ENCODE measurements at regions of chr10 and their contacts with region 1.

Region 1: DNA sequence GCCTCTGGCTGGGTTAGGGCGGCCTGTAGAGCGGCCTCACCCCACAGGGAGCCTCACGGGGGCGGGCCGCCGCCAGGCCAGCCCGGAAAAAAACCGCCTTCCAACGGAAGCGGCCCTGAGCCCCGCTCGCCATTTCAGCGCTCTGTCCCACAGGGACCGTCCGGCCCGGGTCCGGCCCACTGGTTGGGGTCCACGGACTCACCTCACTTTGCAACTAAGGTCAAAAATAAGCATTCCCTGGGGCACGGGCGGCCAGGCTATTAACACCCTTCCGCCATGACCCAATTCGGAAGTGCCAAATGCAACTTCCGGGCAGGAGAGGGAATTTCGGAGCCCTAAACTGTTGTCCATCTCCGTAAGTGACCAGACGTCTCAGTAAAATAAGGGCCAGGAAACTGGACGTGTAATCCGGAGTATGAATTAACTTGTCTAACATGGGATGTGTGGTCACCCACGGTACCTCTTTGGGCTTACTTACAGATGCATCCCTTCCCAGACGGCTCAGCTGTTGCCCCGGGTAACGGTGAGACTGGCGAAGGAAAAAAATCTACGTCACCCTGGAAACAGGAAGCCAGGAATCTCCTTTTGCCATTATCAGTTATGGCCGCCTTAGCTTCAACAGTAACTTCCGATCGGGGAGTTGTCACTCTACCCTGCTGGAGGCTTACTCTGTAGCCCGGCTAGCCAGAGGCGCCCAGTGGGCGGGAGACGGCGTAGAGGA is at the start of gene BBIP1:
- DNase-seq: peak; percentile 100
- H3K4me3 ChIP-seq: peak within 1 kb of the TSS; percentile 97
- H3K27ac ChIP-seq: peak within 1 kb of the TSS; percentile 96
- H3K4me1 ChIP-seq: peaks cover 57% of the 10 kb centered on the region
- CTCF ChIP-seq: no peak
- total RNA-seq, gene BBIP1: 8.9 and 34.4 TPM in 2 replicates

Region 2: GRCh38 chr10:110629680-110630191 is 289.1 kb before region 1 on chr10:
- CTCF ChIA-PET with region 1: no interaction called
- POLR2A ChIA-PET with region 1: no interaction called
- intact Hi-C with region 1: no loop called
- DNase-seq: no peak
- H3K4me3 ChIP-seq: no peak overlapping the region
- H3K27ac ChIP-seq: no peak overlapping the region
- H3K4me1 ChIP-seq: no peaks in the 10 kb centered on the region
- CTCF ChIP-seq: no peak

Region 3: GRCh38 chr10:110746254-110746826 is 172.5 kb before region 1 on chr10:
- CTCF ChIA-PET with region 1: no interaction called
- POLR2A ChIA-PET with region 1: no interaction called
- intact Hi-C with region 1: loop called (anchors 1 kb)
- DNase-seq: peak; percentile 71
- H3K4me3 ChIP-seq: no peak overlapping the region
- H3K27ac ChIP-seq: no peak overlapping the region
- H3K4me1 ChIP-seq: peaks cover 58% of the 10 kb centered on the region
- CTCF ChIP-seq: peak; percentile 99

Region 4: DNA sequence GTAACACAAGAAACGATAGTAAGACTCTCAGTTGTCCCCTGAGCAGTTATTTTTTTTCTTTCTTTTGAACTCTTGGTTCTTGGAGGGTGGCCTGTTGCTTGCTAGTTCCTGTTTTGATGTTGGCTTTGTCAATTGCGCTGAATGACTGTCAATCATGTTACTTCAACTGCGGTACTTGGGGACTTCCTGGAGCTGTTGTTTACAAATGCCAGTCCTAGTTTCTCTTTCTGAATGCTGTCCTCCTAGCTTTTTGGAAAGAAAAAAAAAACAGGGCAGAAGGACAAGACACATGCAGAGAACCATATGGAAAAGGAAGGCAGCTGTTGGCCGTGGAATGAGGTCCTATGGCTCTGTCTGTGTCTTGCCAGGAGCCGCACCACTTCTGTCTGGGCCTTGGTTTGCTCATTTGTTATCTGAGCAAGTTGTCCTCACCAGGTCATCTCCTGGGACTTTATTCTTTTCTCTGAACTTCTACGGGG is 54.1 kb before region 1 on chr10:
- CTCF ChIA-PET with region 1: no interaction called
- POLR2A ChIA-PET with region 1: interaction called, 10 read pairs
- intact Hi-C with region 1: loop called (anchors 2 kb)
- DNase-seq: peak; percentile 89
- H3K4me3 ChIP-seq: peak overlapping the region; percentile 60
- H3K27ac ChIP-seq: peak overlapping the region; percentile 92
- H3K4me1 ChIP-seq: peaks cover 100% of the 10 kb centered on the region
- CTCF ChIP-seq: no peak

Region 5: GRCh38 chr10:110901954-110902819 is 16.6 kb before region 1 on chr10:
- CTCF ChIA-PET with region 1: no interaction called
- POLR2A ChIA-PET with region 1: interaction called, 11 read pairs
- intact Hi-C with region 1: no loop called
- DNase-seq: no peak
- H3K4me3 ChIP-seq: no peak overlapping the region
- H3K27ac ChIP-seq: no peak overlapping the region
- H3K4me1 ChIP-seq: peaks cover 7% of the 10 kb centered on the region
- CTCF ChIP-seq: no peak